Naive thymus-derived CD4-positive, alpha-beta T cell (primary cell): ENCODE measurements at regions of chr14 and their contacts with region 1.

Region 1: GRCh38 chr14:20454516-20455354 is at the starts of genes APEX1 and OSGEP:
- DNase-seq: peak; percentile 86 to 99 (median 98)
- ATAC-seq: peak; percentile 88
- H3K4me3 ChIP-seq: peak within 1 kb of the TSS; percentile 80
- H3K4me3 Mint-ChIP-seq: peak within 1 kb of the TSS in 6 of 10 donors; percentile 7 to 43 (median 30)
- H3K27ac ChIP-seq: peak within 1 kb of the TSS; percentile 85
- H3K27ac Mint-ChIP-seq: no peak within 1 kb of the TSS
- H3K4me1 ChIP-seq: peaks cover 13 to 18% of the 10 kb centered on the region in 2 donors
- H3K4me1 Mint-ChIP-seq: peaks cover 12 to 30% (median 19%) of the 10 kb centered on the region in 7 donors
- H3K27me3 ChIP-seq: no peaks in the 10 kb centered on the region
- H3K27me3 Mint-ChIP-seq: no peaks in the 10 kb centered on the region
- total RNA-seq, gene APEX1: 97.4 to 159 (median 129) TPM
- total RNA-seq, gene OSGEP: 54.2 to 77.2 (median 69.1) TPM

Region 2: GRCh38 chr14:20327005-20327869 is 127.5 kb before region 1 on chr14:
- CTCF ChIA-PET with region 1: interaction called, 5 read pairs
- POLR2A ChIA-PET with region 1: interaction called, 3 read pairs
- intact Hi-C with region 1: loop called (anchors 1 to 2 kb)
- DNase-seq: peak in 7 of 9 donors; percentile 44 to 74 (median 66)
- ATAC-seq: peak; percentile 81
- H3K4me3 ChIP-seq: no peak overlapping the region
- H3K4me3 Mint-ChIP-seq: peak overlapping the region in 5 of 10 donors; percentile 2 to 52 (median 26)
- H3K27ac ChIP-seq: no peak overlapping the region
- H3K27ac Mint-ChIP-seq: peak overlapping the region; percentile 35 to 93 (median 66)
- H3K4me1 ChIP-seq: peaks cover 0 to 4% of the 10 kb centered on the region in 2 donors
- H3K4me1 Mint-ChIP-seq: peaks cover 9 to 42% (median 27%) of the 10 kb centered on the region in 7 donors
- H3K27me3 ChIP-seq: no peaks in the 10 kb centered on the region
- H3K27me3 Mint-ChIP-seq: no peaks in the 10 kb centered on the region

Region 3: GRCh38 chr14:20343092-20343861 is 111.5 kb before region 1 on chr14 and contains the start of gene PARP2:
- CTCF ChIA-PET with region 1: no interaction called
- POLR2A ChIA-PET with region 1: interaction called, 23 read pairs
- intact Hi-C with region 1: loop called (anchors 1 kb)
- DNase-seq: peak; percentile 82 to 94 (median 93)
- ATAC-seq: peak; percentile 86
- H3K4me3 ChIP-seq: peak within 1 kb of the TSS; percentile 74
- H3K4me3 Mint-ChIP-seq: peak within 1 kb of the TSS; percentile 82 to 99 (median 95)
- H3K27ac ChIP-seq: peak within 1 kb of the TSS; percentile 91
- H3K27ac Mint-ChIP-seq: peak within 1 kb of the TSS; percentile 91 to 98 (median 97)
- H3K4me1 ChIP-seq: peaks cover 4 to 5% of the 10 kb centered on the region in 2 donors
- H3K4me1 Mint-ChIP-seq: peaks cover 6 to 27% (median 18%) of the 10 kb centered on the region in 7 donors
- H3K27me3 ChIP-seq: no peaks in the 10 kb centered on the region
- H3K27me3 Mint-ChIP-seq: peaks cover 0 to 7% (median 0%) of the 10 kb centered on the region in 5 donors
- total RNA-seq, gene PARP2: 15.3 to 24.5 (median 21.3) TPM

Region 4: DNA sequence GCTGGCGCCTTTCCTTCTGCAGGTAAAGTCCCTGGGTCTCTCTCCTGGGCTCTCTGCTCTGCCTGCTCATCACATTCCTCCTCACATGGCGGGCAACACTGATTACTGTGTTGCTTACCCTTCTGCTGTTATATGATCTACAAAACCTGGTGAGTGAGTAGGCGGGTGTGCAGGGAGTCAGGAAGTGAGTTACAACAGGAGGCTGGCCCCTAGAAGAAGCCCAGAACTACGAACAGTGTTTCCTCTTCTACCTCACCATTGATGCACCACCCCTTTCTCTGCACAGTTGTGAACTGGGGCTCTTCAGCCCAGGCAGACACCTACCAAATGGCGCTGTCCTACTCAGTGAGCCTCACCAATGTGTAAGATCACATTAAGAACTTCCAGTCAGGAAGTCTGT is 13.9 kb before region 1 on chr14:
- CTCF ChIA-PET with region 1: interaction called, 3 read pairs
- POLR2A ChIA-PET with region 1: interaction called, 14 read pairs
- intact Hi-C with region 1: loop called in 1 of 2 experiments (anchors 1 kb)
- DNase-seq: peak in 7 of 9 donors; percentile 32 to 71 (median 56)
- ATAC-seq: peak; percentile 99
- H3K4me3 ChIP-seq: no peak overlapping the region
- H3K4me3 Mint-ChIP-seq: peak overlapping the region; percentile 49 to 75 (median 62)
- H3K27ac ChIP-seq: peak overlapping the region; percentile 26
- H3K27ac Mint-ChIP-seq: peak overlapping the region; percentile 60 to 95 (median 86)
- H3K4me1 ChIP-seq: peaks cover 13 to 16% of the 10 kb centered on the region in 2 donors
- H3K4me1 Mint-ChIP-seq: peaks cover 18 to 35% (median 23%) of the 10 kb centered on the region in 7 donors
- H3K27me3 ChIP-seq: no peaks in the 10 kb centered on the region
- H3K27me3 Mint-ChIP-seq: no peaks in the 10 kb centered on the region

Region 5: GRCh38 chr14:20477211-20477876 is 22.6 kb after region 1 on chr14:
- CTCF ChIA-PET with region 1: no interaction called
- POLR2A ChIA-PET with region 1: interaction called, 17 read pairs
- intact Hi-C with region 1: loop called in 1 of 2 experiments (anchors 1 kb)
- DNase-seq: peak in 7 of 9 donors; percentile 30 to 68 (median 56)
- ATAC-seq: peak; percentile 69
- H3K4me3 ChIP-seq: peak overlapping the region; percentile 22
- H3K4me3 Mint-ChIP-seq: peak overlapping the region; percentile 68 to 86 (median 77)
- H3K27ac ChIP-seq: peak overlapping the region; percentile 68
- H3K27ac Mint-ChIP-seq: peak overlapping the region; percentile 83 to 96 (median 89)
- H3K4me1 ChIP-seq: peaks cover 46 to 57% of the 10 kb centered on the region in 2 donors
- H3K4me1 Mint-ChIP-seq: peaks cover 51 to 98% (median 85%) of the 10 kb centered on the region in 7 donors
- H3K27me3 ChIP-seq: no peaks in the 10 kb centered on the region
- H3K27me3 Mint-ChIP-seq: no peaks in the 10 kb centered on the region

Region 6: GRCh38 chr14:20489093-20489994 is 34.6 kb after region 1 on chr14:
- CTCF ChIA-PET with region 1: no interaction called
- POLR2A ChIA-PET with region 1: interaction called, 5 read pairs
- intact Hi-C with region 1: loop called in 1 of 2 experiments (anchors 1 kb)
- DNase-seq: peak in 5 of 9 donors; percentile 14 to 40 (median 35)
- ATAC-seq: peak; percentile 70
- H3K4me3 ChIP-seq: peak overlapping the region; percentile 35
- H3K4me3 Mint-ChIP-seq: peak overlapping the region; percentile 67 to 93 (median 76)
- H3K27ac ChIP-seq: peak overlapping the region; percentile 46
- H3K27ac Mint-ChIP-seq: peak overlapping the region; percentile 65 to 95 (median 86)
- H3K4me1 ChIP-seq: peaks cover 37 to 51% of the 10 kb centered on the region in 2 donors
- H3K4me1 Mint-ChIP-seq: peaks cover 47 to 89% (median 79%) of the 10 kb centered on the region in 7 donors
- H3K27me3 ChIP-seq: no peaks in the 10 kb centered on the region
- H3K27me3 Mint-ChIP-seq: no peaks in the 10 kb centered on the region

Region 7: DNA sequence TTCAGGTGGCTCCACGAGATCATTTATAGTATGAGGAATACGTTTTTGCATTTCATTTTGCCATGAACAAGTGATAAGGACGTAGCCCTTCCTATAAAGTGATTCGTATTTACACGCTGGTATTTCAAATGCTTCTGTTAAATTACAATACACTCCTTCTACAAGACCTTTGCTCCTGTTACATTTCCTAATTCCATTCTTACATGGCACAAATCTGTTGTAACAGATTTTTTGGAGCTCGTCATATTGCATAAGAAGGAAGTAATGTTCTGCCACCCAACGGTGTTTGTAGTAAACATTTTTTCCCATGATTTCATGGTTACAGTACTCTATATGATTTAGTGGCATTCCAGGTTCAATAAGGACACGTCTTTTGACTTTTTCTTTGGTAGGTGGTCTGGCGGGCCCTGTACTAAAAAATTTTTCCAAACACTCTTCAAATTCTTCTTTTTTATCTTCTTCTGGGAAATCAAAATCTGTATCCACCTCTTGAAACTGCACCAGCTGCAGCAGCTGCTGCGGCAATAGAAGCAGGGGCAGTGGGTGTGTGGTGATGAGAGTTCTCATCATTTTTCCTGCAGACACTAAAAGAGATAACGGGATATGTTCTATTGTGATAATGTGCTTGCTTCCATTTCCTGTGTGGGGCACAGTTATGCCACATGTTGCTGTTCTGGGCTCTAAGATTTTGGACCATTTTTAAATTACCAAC is 101.9 kb after region 1 on chr14:
- CTCF ChIA-PET with region 1: no interaction called
- POLR2A ChIA-PET with region 1: no interaction called
- intact Hi-C with region 1: no loop called
- DNase-seq: no peak
- ATAC-seq: no peak
- H3K4me3 ChIP-seq: no peak overlapping the region
- H3K4me3 Mint-ChIP-seq: no peak overlapping the region
- H3K27ac ChIP-seq: no peak overlapping the region
- H3K27ac Mint-ChIP-seq: peak overlapping the region in 1 of 9 donors; percentile 51
- H3K4me1 ChIP-seq: no peaks in the 10 kb centered on the region
- H3K4me1 Mint-ChIP-seq: no peaks in the 10 kb centered on the region
- H3K27me3 ChIP-seq: no peaks in the 10 kb centered on the region
- H3K27me3 Mint-ChIP-seq: peaks cover 0 to 10% (median 6%) of the 10 kb centered on the region in 5 donors

Region 8: DNA sequence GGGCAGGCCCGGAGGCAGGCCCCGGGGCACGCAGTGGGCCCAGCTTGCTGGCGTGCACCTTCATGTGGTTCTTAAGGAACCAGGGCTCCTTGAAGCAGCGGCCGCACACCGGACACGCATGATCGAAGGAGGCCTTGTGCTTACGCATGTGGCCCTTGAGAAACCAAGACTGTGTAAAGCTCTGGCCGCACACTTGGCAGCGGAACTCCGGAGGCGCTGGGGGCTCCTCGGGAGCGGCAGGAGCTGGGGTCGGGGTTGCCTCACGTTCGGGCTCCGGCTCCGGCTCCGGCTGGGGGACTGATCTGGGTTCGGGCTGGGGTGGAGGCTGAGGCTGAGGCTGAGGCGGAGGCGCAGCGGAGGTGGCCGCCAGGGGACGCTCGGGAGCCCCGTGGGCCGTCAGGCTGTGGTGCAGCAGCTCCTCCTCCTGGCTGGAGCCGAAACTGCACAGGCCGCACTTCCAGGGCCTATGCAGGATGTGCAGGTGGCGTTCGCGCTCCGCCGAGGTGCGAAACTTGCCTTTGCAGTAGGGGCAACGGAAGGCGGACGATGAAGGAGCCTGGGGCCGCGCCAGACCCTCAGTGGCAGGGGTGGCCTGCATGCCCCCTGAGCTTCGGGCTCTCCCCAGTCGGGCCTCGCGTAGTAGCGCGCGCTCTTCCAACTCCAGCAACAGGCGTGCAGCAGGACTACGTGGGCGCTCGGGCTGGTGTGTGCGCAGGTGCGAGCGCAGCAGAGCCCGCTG is 637.7 kb after region 1 on chr14:
- CTCF ChIA-PET with region 1: no interaction called
- POLR2A ChIA-PET with region 1: no interaction called
- intact Hi-C with region 1: loop called in 1 of 2 experiments (anchors 1 kb)
- DNase-seq: peak; percentile 82 to 98 (median 93)
- ATAC-seq: peak; percentile 90
- H3K4me3 ChIP-seq: no peak overlapping the region
- H3K4me3 Mint-ChIP-seq: peak overlapping the region in 1 of 10 donors; percentile 6
- H3K27ac ChIP-seq: no peak overlapping the region
- H3K27ac Mint-ChIP-seq: peak overlapping the region in 8 of 9 donors; percentile 17 to 88 (median 78)
- H3K4me1 ChIP-seq: peaks cover 6 to 14% of the 10 kb centered on the region in 2 donors
- H3K4me1 Mint-ChIP-seq: peaks cover 15 to 37% (median 27%) of the 10 kb centered on the region in 7 donors
- H3K27me3 ChIP-seq: no peaks in the 10 kb centered on the region
- H3K27me3 Mint-ChIP-seq: peaks cover 0 to 17% (median 0%) of the 10 kb centered on the region in 5 donors